Astrocyte of the cerebellum (primary cell): ENCODE measurements at regions of chr21 and their contacts with region 1.

Region 1: GRCh38 chr21:29144736-29145353 is 14.4 kb downstream of the MAP3K7CL start:
- DNase-seq: no peak
- H3K4me3 ChIP-seq: no peak overlapping the region
- CTCF ChIP-seq: no peak

Region 2: GRCh38 chr21:29104239-29104708 is 40.6 kb before region 1 on chr21:
- in situ Hi-C with region 1: loop called (anchors 5 kb)
- DNase-seq: no peak
- H3K4me3 ChIP-seq: no peak overlapping the region
- CTCF ChIP-seq: no peak